Activated B cell treated with CpG ODN at 0.5 μM for 24 hours (primary cell): ENCODE measurements at regions of chr3 and their contacts with region 1.

Region 1: DNA sequence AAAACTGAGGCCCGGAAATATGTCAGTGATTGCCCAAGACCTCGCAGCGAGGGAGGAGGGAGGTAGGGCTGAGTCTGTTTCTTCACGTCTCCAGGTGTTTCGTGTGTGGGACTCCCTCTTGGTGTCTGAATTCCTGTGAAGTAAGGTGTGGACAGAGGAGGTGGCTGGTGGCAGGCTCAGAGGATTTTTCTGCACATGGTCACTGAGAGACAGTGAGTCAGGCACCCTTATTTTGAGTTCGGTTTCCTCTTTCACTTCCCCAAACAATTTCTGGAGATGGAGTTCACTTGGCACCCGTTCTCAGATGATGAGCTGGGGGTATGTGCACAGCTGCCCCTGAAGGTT is 46.3 kb upstream of the VPS8 start:
- DNase-seq: no peak
- ATAC-seq: peak; percentile 89
- H3K4me3 Mint-ChIP-seq: peak overlapping the region; percentile 8
- H3K27ac Mint-ChIP-seq: peak overlapping the region; percentile 35
- H3K4me1 Mint-ChIP-seq: peaks cover 26% of the 10 kb centered on the region
- H3K27me3 Mint-ChIP-seq: peaks cover 1% of the 10 kb centered on the region
- CTCF ChIP-seq: no peak

Region 2: GRCh38 chr3:184679056-184679816 is 86.5 kb before region 1 on chr3:
- CTCF ChIA-PET with region 1: no interaction called
- POLR2A ChIA-PET with region 1: interaction called, 3 read pairs
- intact Hi-C with region 1: loop called (anchors 10 kb)
- DNase-seq: no peak
- ATAC-seq: no peak
- H3K4me3 Mint-ChIP-seq: no peak overlapping the region
- H3K27ac Mint-ChIP-seq: no peak overlapping the region
- H3K4me1 Mint-ChIP-seq: peaks cover 33% of the 10 kb centered on the region
- H3K27me3 Mint-ChIP-seq: no peaks in the 10 kb centered on the region
- CTCF ChIP-seq: no peak